ENCODE measurements at regions of chr18 and their contacts with region 1.

Region 1: GRCh38 chr18:36284671-36285295 is 12.7 kb upstream of the FHOD3 start:
- DNase-seq: peak in 31 of 42 donors; percentile 21 to 87 (median 60)

Region 2: DNA sequence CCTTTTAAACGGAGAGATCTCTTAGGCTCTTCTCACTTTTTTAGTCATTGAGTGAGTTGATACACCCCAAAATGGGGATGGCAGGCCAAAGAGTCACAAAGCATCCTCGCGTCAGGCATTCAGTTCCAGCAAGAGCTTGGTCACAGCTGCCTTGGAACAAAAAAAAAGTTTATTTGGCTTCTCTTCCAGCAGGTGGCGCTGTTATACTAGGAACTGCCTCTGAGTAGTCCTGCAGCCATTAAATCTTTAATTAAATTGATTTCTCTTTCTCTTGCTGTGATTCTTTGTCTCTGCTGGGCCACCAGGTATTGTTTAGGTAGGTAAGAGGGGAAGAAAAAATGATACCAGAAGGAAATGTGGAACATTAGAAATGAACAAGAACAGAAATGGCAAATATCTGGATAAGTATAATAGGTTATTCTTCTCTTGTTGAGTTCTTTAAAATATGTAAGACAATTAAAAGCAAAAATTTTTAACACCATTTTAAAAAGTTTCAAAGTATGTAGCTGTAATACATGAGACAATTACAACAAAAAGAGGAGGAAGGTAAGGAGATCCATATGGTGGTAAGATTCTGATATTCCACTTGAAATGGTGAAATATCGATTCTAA is 528.2 kb before region 1 on chr18:
- intact Hi-C with region 1: loop called (anchors 10 kb)
- DNase-seq: peak in 40 of 42 donors; percentile 13 to 89 (median 70)

Region 3: DNA sequence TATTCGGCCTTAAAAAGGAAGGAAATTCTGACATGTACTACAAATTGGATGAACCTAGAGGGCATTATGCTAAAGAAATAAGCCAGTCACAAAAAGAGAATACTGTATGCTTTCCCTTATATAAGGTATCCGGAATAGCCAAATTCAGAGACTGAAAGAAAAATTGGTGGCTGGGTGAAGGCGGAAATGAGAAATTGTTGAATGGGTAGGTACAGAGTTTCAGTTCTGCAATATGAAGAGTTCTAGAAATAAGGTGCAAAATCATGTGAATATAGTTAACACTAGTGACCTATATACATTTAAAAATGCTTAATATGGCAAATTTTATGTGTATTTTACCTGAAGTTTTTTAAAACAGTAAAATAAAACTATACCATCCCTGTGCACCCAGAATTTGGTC is 269.2 kb before region 1 on chr18:
- intact Hi-C with region 1: loop called (anchors 5 kb)
- DNase-seq: no peak

Region 4: DNA sequence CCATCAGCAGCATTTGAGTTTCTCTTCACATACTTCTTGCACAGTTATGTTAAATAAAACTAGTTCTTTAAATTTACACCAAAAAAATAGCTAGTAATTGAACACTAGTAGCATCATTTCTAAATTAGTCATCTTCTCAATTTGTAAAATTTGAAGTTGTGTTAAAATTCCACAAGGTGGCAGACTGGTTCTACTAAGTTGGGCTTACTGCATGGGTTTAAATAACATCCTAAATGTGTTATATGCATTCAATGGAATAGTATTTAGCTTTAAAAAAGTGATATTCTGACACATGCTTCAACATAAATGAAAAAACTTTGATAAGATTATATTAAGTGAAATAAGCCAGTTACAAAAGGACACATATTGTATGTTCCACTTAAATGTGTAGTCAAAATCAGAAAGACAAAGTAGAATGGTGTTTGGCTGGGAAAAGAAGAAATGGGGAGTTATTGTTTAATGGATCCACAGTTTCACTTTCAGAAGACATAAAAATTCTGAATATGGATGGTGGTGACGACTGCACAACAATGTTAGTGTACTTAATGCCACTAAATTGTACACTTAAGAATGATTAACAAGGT is 188.8 kb before region 1 on chr18:
- intact Hi-C with region 1: loop called (anchors 10 kb)
- DNase-seq: peak in 2 of 42 donors; percentile 9 to 35